ENCODE measurements at regions of chr6 and their contacts with region 1.

Region 1: GRCh38 chr6:112043032-112044007 is 10.6 kb upstream of the CCN6 start:
- DNase-seq: peak; percentile 94
- H3K4me3 Mint-ChIP-seq: peak overlapping the region; percentile 91
- H3K27ac Mint-ChIP-seq: peak overlapping the region; percentile 98
- H3K4me1 Mint-ChIP-seq: peaks cover 39% of the 10 kb centered on the region
- H3K27me3 Mint-ChIP-seq: no peaks in the 10 kb centered on the region

Region 2: DNA sequence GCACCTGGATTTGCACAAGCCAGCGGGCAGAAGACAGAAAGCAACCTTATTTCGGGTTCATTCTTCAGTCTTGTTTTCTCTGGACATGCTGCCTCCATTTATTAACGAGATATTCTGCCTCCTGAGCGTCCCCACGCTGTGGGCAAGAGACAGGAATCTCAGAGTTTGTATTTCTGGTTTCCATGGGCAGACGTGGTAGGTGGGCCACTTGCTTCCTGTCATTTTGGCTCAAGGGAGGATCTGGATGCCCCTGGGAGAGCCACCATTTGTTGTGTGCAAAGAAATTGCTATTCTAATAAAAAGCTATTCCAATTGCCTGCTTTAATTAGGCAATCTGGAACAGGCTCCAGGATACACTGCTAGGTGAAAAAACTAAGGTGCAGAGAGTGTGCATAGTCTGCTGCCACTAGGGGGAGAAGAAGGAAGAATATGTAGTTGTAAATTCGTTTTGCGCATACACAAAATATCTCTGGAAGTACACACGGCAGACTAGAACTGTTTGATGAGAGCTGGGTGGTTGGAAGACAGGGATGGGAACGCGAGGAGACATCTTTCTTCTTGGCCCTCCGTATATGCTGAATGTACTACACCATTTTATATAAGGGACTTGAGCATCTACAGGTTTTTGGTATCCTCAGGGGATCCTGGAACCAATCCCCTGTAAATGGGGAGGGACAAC is 986.1 kb before region 1 on chr6:
- CTCF ChIA-PET with region 1: no interaction called
- intact Hi-C with region 1: loop called (anchors 5 kb)
- DNase-seq: no peak
- H3K4me3 Mint-ChIP-seq: no peak overlapping the region
- H3K27ac Mint-ChIP-seq: no peak overlapping the region
- H3K4me1 Mint-ChIP-seq: no peaks in the 10 kb centered on the region
- H3K27me3 Mint-ChIP-seq: no peaks in the 10 kb centered on the region

Region 3: GRCh38 chr6:111338843-111339242 is 704.5 kb before region 1 on chr6:
- CTCF ChIA-PET with region 1: no interaction called
- intact Hi-C with region 1: loop called (anchors 5 kb)
- DNase-seq: no peak
- H3K4me3 Mint-ChIP-seq: no peak overlapping the region
- H3K27ac Mint-ChIP-seq: no peak overlapping the region
- H3K4me1 Mint-ChIP-seq: peaks cover 22% of the 10 kb centered on the region
- H3K27me3 Mint-ChIP-seq: no peaks in the 10 kb centered on the region

Region 4: GRCh38 chr6:111642463-111643158 is 400.7 kb before region 1 on chr6:
- CTCF ChIA-PET with region 1: interaction called, 7 read pairs
- intact Hi-C with region 1: loop called (anchors 1 kb)
- DNase-seq: peak; percentile 73
- H3K4me3 Mint-ChIP-seq: no peak overlapping the region
- H3K27ac Mint-ChIP-seq: no peak overlapping the region
- H3K4me1 Mint-ChIP-seq: no peaks in the 10 kb centered on the region
- H3K27me3 Mint-ChIP-seq: no peaks in the 10 kb centered on the region

Region 5: GRCh38 chr6:111841822-111842221 is 201.5 kb before region 1 on chr6:
- CTCF ChIA-PET with region 1: interaction called, 7 read pairs
- intact Hi-C with region 1: loop called (anchors 1 kb)
- DNase-seq: peak; percentile 70
- H3K4me3 Mint-ChIP-seq: no peak overlapping the region
- H3K27ac Mint-ChIP-seq: no peak overlapping the region
- H3K4me1 Mint-ChIP-seq: peaks cover 36% of the 10 kb centered on the region
- H3K27me3 Mint-ChIP-seq: no peaks in the 10 kb centered on the region

Region 6: GRCh38 chr6:112010328-112010727 is 33.0 kb before region 1 on chr6:
- CTCF ChIA-PET with region 1: interaction called, 310 read pairs
- intact Hi-C with region 1: loop called (anchors 1 kb)
- DNase-seq: peak; percentile 65
- H3K4me3 Mint-ChIP-seq: no peak overlapping the region
- H3K27ac Mint-ChIP-seq: no peak overlapping the region
- H3K4me1 Mint-ChIP-seq: peaks cover 40% of the 10 kb centered on the region
- H3K27me3 Mint-ChIP-seq: no peaks in the 10 kb centered on the region

Region 7: GRCh38 chr6:112163295-112164257 is 120.3 kb after region 1 on chr6:
- CTCF ChIA-PET with region 1: interaction called, 9 read pairs
- intact Hi-C with region 1: loop called (anchors 1 kb)
- DNase-seq: peak; percentile 91
- H3K4me3 Mint-ChIP-seq: peak overlapping the region; percentile 61
- H3K27ac Mint-ChIP-seq: peak overlapping the region; percentile 37
- H3K4me1 Mint-ChIP-seq: peaks cover 12% of the 10 kb centered on the region
- H3K27me3 Mint-ChIP-seq: peaks cover 6% of the 10 kb centered on the region

Region 8: DNA sequence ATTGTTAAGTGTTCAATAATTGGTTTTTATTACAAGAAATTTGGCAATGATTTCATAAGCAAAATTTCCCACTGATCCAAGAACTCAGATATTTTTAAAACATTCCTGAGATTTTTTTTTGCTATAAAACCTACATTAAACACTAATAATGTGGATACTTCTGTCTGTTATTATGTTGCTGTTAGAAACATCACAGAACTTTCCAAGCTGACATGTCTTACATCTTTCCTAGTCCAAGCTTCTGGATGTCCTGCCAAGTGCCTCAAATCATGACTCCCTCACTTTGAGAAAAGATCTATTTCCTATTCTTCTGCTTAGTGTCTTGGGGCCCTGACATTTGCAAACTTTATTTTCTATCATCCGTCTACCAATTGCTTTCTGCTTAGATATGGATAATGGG is 414.6 kb after region 1 on chr6:
- CTCF ChIA-PET with region 1: no interaction called
- intact Hi-C with region 1: no loop called
- DNase-seq: no peak
- H3K4me3 Mint-ChIP-seq: no peak overlapping the region
- H3K27ac Mint-ChIP-seq: no peak overlapping the region
- H3K4me1 Mint-ChIP-seq: no peaks in the 10 kb centered on the region
- H3K27me3 Mint-ChIP-seq: no peaks in the 10 kb centered on the region